ENCODE measurements at regions of chr1 and their contacts with region 1.

Region 1: GRCh38 chr1:32817159-32817814 is at the starts of genes S100PBP and YARS1:
- DNase-seq: peak; percentile 100
- H3K4me3 Mint-ChIP-seq: peak within 1 kb of the TSS; percentile 97
- H3K27ac Mint-ChIP-seq: peak within 1 kb of the TSS; percentile 97
- H3K4me1 Mint-ChIP-seq: peaks cover 53% of the 10 kb centered on the region
- H3K27me3 Mint-ChIP-seq: no peaks in the 10 kb centered on the region
- total RNA-seq, gene S100PBP: 48.8 and 55.8 TPM in 2 replicates
- total RNA-seq, gene YARS1: 205 and 225 TPM in 2 replicates

Region 2: DNA sequence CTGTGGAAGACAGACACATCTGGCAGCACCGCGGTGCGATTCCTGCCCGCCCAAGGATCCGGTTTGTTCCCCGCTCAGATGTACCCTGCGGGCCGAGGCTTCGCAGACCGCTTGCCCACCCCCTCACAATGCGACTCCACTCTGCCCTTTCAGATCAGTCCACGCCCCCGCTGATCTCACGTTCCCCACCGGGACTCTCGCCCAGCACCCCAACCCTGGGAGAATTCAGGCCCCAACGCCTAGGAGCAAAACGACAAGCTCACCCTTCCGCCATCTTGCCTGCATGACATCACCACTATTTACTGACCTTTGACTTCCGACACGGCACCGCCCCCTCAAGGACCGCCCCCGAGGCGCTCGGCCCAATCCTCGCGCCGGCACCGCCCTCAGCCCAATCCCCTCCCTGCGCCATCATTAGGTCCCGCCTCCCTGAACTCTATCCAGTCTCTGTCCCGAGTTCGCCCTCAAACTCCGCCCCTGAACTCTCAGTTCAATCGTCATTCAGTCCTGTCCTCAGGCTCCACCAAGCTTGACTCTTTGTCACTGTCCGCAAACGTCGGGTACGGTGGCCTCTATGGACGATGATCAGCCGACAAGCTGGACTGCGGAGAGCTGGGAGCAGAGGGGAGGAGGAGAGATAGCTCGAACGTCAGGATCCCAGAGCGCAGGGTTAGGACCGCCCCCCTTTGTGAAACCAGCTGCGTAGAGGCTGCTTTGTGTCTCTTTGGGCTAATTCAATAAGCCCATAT is 423.0 kb before region 1 on chr1 and contains the start of gene BSDC1:
- intact Hi-C with region 1: loop called (anchors 1 kb)
- DNase-seq: peak; percentile 98
- H3K4me3 Mint-ChIP-seq: peak within 1 kb of the TSS; percentile 97
- H3K27ac Mint-ChIP-seq: peak within 1 kb of the TSS; percentile 99
- H3K4me1 Mint-ChIP-seq: peaks cover 16% of the 10 kb centered on the region
- H3K27me3 Mint-ChIP-seq: peaks cover 7% of the 10 kb centered on the region
- total RNA-seq, gene BSDC1: 48.8 and 50.3 TPM in 2 replicates

Region 3: DNA sequence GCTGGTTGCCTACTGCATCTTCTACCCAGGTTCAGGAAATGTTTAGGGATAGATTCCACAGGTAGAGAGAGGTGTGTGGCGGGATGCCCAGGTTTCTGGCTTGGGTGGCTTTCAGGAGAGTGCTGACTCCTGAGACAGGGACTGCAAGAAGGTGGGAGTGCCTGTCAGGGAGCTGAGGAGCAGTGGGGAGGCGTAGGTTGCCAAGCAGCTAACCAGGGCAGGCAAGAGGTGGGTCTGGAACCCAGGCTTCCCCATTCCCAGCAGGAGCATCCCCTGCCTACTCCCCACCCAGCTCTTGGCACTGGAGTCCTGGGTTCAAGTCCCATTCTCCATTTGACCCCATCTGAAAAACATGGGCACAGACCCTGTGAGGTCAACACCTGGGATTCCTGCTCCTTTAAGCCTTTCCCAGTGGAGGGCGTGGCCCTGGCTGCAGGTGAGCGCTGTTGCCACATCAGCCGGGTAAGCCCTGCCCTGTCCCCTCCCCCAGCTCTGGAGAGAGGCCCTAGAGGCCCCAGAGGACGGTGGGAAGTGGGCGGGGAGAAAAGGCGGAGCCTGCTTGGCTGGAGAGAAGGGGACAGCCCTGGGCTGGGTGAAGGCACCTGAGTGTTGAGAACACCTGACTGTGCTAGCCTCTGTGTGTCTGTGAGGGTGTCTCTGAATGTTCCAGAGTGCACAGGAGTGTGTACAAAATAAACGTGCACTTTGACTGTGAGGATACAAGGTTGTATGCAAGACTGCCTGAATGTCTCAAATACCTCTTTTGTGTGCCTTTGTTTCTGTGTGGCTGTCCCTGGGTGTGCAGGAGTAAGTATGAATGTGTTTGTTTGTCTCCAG is 100.8 kb before region 1 on chr1:
- intact Hi-C with region 1: loop called (anchors 5 kb)
- DNase-seq: peak; percentile 60
- H3K4me3 Mint-ChIP-seq: no peak overlapping the region
- H3K27ac Mint-ChIP-seq: no peak overlapping the region
- H3K4me1 Mint-ChIP-seq: peaks cover 10% of the 10 kb centered on the region
- H3K27me3 Mint-ChIP-seq: peaks cover 12% of the 10 kb centered on the region

Region 4: GRCh38 chr1:32798679-32799416 is 18.4 kb before region 1 on chr1:
- intact Hi-C with region 1: loop called (anchors 1 kb)
- DNase-seq: peak; percentile 49
- H3K4me3 Mint-ChIP-seq: peak overlapping the region; percentile 68
- H3K27ac Mint-ChIP-seq: peak overlapping the region; percentile 96
- H3K4me1 Mint-ChIP-seq: peaks cover 47% of the 10 kb centered on the region
- H3K27me3 Mint-ChIP-seq: no peaks in the 10 kb centered on the region

Region 5: DNA sequence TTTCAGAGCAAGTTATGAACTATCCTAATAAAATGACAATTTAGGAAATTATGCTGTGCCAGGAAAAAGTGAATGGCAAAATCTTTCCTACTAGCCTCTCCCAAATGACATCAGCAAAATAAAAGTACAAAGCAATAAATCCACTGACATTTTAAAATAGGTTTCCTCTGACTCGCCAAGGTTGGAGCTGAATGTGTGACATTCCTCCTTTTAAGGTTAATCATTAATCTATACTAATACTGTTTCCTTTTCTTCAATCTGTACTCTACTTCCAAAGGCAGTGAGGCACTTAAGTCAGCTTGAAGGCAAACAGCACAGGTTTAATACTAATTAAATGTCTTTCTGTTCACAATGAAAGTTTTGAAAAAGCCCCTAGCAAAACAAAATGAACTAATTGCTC is 131.6 kb after region 1 on chr1:
- intact Hi-C with region 1: no loop called
- DNase-seq: no peak
- H3K4me3 Mint-ChIP-seq: no peak overlapping the region
- H3K27ac Mint-ChIP-seq: peak overlapping the region; percentile 67
- H3K4me1 Mint-ChIP-seq: peaks cover 43% of the 10 kb centered on the region
- H3K27me3 Mint-ChIP-seq: no peaks in the 10 kb centered on the region

Region 6: GRCh38 chr1:32964461-32965250 is 147.4 kb after region 1 on chr1 and contains the start of gene RNF19B:
- intact Hi-C with region 1: loop called (anchors 2 kb)
- DNase-seq: peak; percentile 94
- H3K4me3 Mint-ChIP-seq: peak within 1 kb of the TSS; percentile 84
- H3K27ac Mint-ChIP-seq: peak within 1 kb of the TSS; percentile 86
- H3K4me1 Mint-ChIP-seq: peaks cover 58% of the 10 kb centered on the region
- H3K27me3 Mint-ChIP-seq: peaks cover 1% of the 10 kb centered on the region
- total RNA-seq, gene RNF19B: 52.1 and 56.5 TPM in 2 replicates

Region 7: GRCh38 chr1:33036526-33037503 is 219.5 kb after region 1 on chr1 and contains the start of gene AK2:
- intact Hi-C with region 1: loop called (anchors 2 kb)
- DNase-seq: peak; percentile 91
- H3K4me3 Mint-ChIP-seq: peak within 1 kb of the TSS; percentile 91
- H3K27ac Mint-ChIP-seq: peak within 1 kb of the TSS; percentile 90
- H3K4me1 Mint-ChIP-seq: peaks cover 48% of the 10 kb centered on the region
- H3K27me3 Mint-ChIP-seq: no peaks in the 10 kb centered on the region
- total RNA-seq, gene AK2: 387 and 400 TPM in 2 replicates

Region 8: DNA sequence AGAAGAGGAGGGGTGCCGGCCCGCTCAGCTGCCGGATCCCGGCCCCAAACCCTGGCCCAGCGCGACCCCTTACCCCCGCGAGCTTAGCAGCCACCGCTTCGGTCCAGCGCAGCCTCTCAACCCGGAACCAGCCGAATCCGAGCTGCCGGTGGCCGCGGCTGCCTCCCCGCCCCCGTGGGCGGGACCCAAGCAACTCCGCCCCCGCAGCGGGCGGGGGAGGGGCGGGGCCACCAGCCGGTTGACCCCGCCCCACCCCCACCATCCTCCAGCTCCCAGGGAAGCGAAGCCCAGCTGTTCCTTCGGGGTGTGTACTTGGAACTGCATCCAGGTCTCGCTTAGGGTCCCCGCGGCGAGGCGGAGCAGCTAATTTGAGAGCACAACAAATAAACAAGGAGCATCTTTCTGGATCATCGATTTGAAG is 364.6 kb after region 1 on chr1 and contains the start of gene TRIM62:
- intact Hi-C with region 1: loop called (anchors 5 kb)
- DNase-seq: peak; percentile 69
- H3K4me3 Mint-ChIP-seq: peak within 1 kb of the TSS; percentile 87
- H3K27ac Mint-ChIP-seq: peak within 1 kb of the TSS; percentile 81
- H3K4me1 Mint-ChIP-seq: peaks cover 28% of the 10 kb centered on the region
- H3K27me3 Mint-ChIP-seq: peaks cover 19% of the 10 kb centered on the region
- total RNA-seq, gene TRIM62: 4.1 and 4.5 TPM in 2 replicates

Measured in activated T-helper 1 cell treated with anti-CD3 and anti-CD28 coated beads, Interleukin-12 subunit alpha, Interleukin-12 subunit beta, Interleukin-2, Interleukin-4 antibody, amounts not matched to agents 30 ng/mL and 10 ng/mL and 1 ng/mL, durations not matched to agents 14 hours and 24 hours and 36 hours (primary cell).